ENCODE measurements at regions of chr1 and their contacts with region 1.

Region 1: DNA sequence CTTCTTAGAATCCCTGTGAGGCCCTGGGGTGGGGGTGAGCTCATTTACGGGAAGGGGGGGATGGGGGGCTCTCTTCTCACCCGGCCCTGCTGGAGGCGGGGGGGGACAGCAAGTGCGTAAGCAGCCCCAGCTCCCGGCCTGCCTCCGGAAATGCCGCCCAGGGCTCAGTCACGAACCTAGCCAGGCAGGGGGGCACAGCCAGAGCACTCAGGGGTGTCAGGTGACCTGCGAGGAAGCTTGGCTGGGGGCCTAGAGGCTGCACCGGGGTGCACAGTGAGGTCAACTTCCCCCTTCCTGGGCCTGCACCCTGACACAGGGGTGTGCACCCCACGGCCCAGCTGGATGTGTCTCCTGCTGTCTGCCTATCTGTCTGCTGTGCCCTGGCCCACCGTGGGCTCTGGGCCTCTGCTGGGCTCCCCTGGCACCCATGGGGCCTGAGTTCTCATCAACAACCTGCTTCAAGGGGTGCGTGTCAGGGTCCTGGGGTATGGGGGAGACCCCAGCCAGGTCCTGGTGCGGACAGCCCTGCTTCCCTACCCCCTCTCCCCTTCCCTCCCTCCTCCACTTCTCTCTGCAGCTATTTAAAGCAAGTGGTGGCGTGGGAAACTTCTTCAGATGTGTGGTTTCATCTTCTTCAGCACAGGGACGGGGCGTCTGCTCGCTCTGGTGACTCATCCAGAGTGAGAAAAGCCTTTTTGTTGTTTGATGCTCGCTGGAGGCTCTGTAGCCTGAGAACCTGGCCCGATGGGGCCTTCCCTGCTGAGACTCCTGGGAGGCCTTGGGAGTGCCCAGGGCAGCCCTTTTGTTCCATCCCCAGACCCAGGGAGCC is 92.5 kb upstream of the RUNX3 start:
- DNase-seq: peak; percentile 98
- ATAC-seq: peak; percentile 89
- H3K4me3 Mint-ChIP-seq: peak overlapping the region; percentile 78
- H3K27ac Mint-ChIP-seq: peak overlapping the region; percentile 88
- H3K4me1 Mint-ChIP-seq: peaks cover 96% of the 10 kb centered on the region
- H3K27me3 Mint-ChIP-seq: no peaks in the 10 kb centered on the region

Region 2: DNA sequence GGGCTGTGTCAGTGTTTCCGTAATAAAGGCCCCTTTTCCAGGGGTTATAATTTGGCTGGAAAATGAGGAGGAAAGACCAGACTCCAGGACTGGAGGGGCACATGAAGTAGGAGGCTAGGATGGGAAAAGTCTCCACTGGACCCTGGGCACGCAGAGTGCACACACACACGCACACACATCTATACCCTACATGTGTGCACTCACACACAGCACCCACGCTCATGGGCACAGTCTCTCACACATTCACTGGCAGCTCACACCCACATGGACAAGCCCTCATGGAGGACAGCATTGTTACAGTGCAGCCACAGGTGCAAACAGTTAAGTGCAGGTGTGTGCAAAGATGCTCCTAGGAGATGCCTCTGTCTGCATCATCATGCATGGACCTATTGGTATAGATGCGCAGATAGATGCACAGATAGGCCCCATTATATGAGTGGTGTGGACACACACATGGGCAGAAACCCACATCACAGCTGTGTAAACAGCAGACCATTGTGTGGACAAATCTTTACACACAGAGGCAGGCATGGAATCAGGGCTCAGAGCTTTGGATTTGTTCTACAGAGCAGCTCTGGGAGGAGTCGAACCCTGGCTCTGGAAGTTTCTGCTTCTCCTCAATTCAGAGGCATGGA is 83.4 kb before region 1 on chr1:
- CTCF ChIA-PET with region 1: no interaction called
- POLR2A ChIA-PET with region 1: no interaction called
- DNase-seq: no peak
- ATAC-seq: no peak
- H3K4me3 Mint-ChIP-seq: no peak overlapping the region
- H3K27ac Mint-ChIP-seq: peak overlapping the region; percentile 37
- H3K4me1 Mint-ChIP-seq: peaks cover 90% of the 10 kb centered on the region
- H3K27me3 Mint-ChIP-seq: no peaks in the 10 kb centered on the region

Region 3: DNA sequence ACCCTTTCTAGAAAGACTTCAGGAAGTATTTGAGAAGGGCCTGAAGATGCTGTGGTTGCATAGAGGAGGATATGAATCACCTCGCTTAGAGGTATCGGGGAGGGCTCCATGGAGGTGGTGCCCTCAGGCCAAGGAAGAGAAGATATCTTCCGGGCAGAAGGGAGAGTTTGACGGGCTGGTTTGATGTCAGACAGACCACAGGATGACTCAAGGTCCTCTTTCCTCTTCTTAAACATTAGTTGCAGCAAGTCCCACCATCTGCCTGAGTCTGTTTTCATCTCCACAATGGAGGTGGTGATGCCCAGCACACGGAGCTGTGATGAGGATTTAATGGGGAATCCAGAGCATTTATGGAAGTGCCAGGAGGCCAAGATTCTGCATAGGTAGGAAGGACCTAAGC is 67.4 kb before region 1 on chr1:
- CTCF ChIA-PET with region 1: interaction called, 12 read pairs
- POLR2A ChIA-PET with region 1: interaction called, 5 read pairs
- DNase-seq: peak; percentile 90
- ATAC-seq: peak; percentile 81
- H3K4me3 Mint-ChIP-seq: peak overlapping the region; percentile 73
- H3K27ac Mint-ChIP-seq: peak overlapping the region; percentile 94
- H3K4me1 Mint-ChIP-seq: peaks cover 95% of the 10 kb centered on the region
- H3K27me3 Mint-ChIP-seq: no peaks in the 10 kb centered on the region

Region 4: GRCh38 chr1:24981631-24982005 is 41.0 kb before region 1 on chr1:
- CTCF ChIA-PET with region 1: no interaction called
- POLR2A ChIA-PET with region 1: interaction called, 11 read pairs
- DNase-seq: peak; percentile 70
- ATAC-seq: peak; percentile 52
- H3K4me3 Mint-ChIP-seq: peak overlapping the region; percentile 63
- H3K27ac Mint-ChIP-seq: peak overlapping the region; percentile 93
- H3K4me1 Mint-ChIP-seq: peaks cover 93% of the 10 kb centered on the region
- H3K27me3 Mint-ChIP-seq: no peaks in the 10 kb centered on the region

Region 5: GRCh38 chr1:24987875-24988557 is 34.6 kb before region 1 on chr1:
- CTCF ChIA-PET with region 1: interaction called, 25 read pairs
- POLR2A ChIA-PET with region 1: interaction called, 11 read pairs
- DNase-seq: no peak
- ATAC-seq: no peak
- H3K4me3 Mint-ChIP-seq: no peak overlapping the region
- H3K27ac Mint-ChIP-seq: peak overlapping the region; percentile 31
- H3K4me1 Mint-ChIP-seq: peaks cover 98% of the 10 kb centered on the region
- H3K27me3 Mint-ChIP-seq: no peaks in the 10 kb centered on the region

Region 6: GRCh38 chr1:24996983-24997893 is 25.3 kb before region 1 on chr1:
- CTCF ChIA-PET with region 1: interaction called, 25 read pairs
- POLR2A ChIA-PET with region 1: interaction called, 43 read pairs
- DNase-seq: peak; percentile 96
- ATAC-seq: peak; percentile 80
- H3K4me3 Mint-ChIP-seq: peak overlapping the region; percentile 66
- H3K27ac Mint-ChIP-seq: peak overlapping the region; percentile 96
- H3K4me1 Mint-ChIP-seq: peaks cover 92% of the 10 kb centered on the region
- H3K27me3 Mint-ChIP-seq: no peaks in the 10 kb centered on the region

Region 7: DNA sequence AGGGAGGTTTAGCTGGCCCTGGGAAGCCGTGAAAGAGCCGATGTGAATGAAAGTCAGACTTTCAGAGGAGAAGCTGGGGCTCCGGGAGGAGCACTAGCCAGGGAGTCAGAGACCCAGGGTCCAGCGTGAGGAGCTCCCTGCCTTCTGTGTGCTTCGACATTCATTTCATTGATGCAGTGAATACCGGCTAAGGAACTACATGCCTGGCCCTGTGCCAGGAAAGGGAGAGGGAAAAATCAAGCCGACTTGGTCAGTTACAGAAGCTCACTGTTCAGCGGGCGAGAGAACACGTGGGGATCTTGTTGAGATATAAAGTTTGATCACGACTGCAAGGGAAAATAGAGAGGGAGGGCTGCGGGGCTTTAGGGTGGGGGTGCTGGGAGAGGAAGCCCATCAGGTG is 15.8 kb before region 1 on chr1:
- CTCF ChIA-PET with region 1: interaction called, 19 read pairs
- POLR2A ChIA-PET with region 1: interaction called, 15 read pairs
- DNase-seq: no peak
- ATAC-seq: no peak
- H3K4me3 Mint-ChIP-seq: no peak overlapping the region
- H3K27ac Mint-ChIP-seq: peak overlapping the region; percentile 36
- H3K4me1 Mint-ChIP-seq: peaks cover 88% of the 10 kb centered on the region
- H3K27me3 Mint-ChIP-seq: no peaks in the 10 kb centered on the region